Heart left ventricle (tissue), 16 donors: ENCODE measurements at regions of chr17 and their contacts with region 1.

Region 1: DNA sequence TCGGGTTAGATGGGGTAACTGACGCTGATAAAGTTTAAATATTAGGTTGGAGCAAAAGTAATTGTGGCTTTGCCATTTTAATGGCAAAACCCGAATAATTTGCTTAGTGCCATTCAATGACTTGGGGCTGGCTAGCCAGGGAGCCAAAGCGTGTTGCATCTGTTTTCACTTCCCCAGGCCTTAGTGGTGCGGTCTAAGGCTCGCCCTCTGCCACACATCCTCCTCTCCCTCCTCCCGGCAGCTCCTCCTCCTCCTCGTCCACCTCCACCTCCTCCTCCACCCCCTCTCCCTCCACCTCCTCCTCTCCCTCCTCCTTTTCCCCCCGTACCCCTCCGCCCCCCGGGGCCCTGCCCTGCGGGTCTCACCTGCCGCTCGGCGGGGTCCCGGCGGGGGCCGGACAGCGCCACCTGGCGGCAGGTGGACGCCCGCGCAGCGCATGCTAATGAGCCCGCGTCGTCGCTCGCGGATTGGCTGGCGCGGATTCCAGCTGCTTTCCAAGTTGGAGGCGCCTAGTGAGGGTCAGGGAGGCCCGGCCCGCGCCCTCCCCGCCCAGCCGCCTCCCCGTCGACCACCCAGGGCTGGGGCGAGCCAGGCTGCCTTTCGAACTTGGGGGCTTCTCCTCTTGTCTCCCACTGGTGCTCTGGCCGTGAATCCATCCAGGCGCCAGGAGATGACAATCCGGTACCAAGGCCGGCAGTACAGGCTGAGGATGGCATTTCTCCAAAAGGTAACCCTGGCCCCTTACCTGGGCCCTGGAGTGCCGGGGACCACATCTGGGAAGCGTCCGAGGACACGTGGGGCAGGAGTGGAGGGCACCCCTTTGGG is 36.6 kb upstream of the RGS9 start:
- DNase-seq: peak; percentile 85 to 95 (median 89)
- ATAC-seq: peak; percentile 79 to 97 (median 95)
- H3K4me3 ChIP-seq: peak overlapping the region; percentile 31 to 64 (median 54)
- H3K27ac ChIP-seq: peak overlapping the region in 9 of 12 donors; percentile 4 to 81 (median 58)
- H3K4me1 ChIP-seq: peaks cover 0 to 21% (median 7%) of the 10 kb centered on the region in 12 donors
- H3K27me3 ChIP-seq: no peaks in the 10 kb centered on the region
- CTCF ChIP-seq: peak; percentile 61 to 95 (median 86)
- POLR2A ChIP-seq: no peak

Region 2: GRCh38 chr17:64968652-64969501 is 131.7 kb before region 1 on chr17:
- intact Hi-C with region 1: loop called in 8 of 10 experiments (anchors 2 to 10 kb)
- DNase-seq: no peak
- ATAC-seq: no peak
- H3K4me3 ChIP-seq: no peak overlapping the region
- H3K27ac ChIP-seq: peak overlapping the region in 1 of 12 donors; percentile 74
- H3K4me1 ChIP-seq: peaks cover 0 to 33% (median 8%) of the 10 kb centered on the region in 12 donors
- H3K27me3 ChIP-seq: no peaks in the 10 kb centered on the region
- CTCF ChIP-seq: no peak
- POLR2A ChIP-seq: no peak

Region 3: GRCh38 chr17:64975329-64976087 is 125.0 kb before region 1 on chr17:
- intact Hi-C with region 1: loop called in 8 of 10 experiments (anchors 1 to 10 kb)
- DNase-seq: peak; percentile 94 to 98 (median 96)
- ATAC-seq: peak; percentile 90 to 98 (median 96)
- H3K4me3 ChIP-seq: peak overlapping the region; percentile 59 to 98 (median 82)
- H3K27ac ChIP-seq: peak overlapping the region; percentile 94 to 100 (median 98)
- H3K4me1 ChIP-seq: peaks cover 0 to 26% (median 16%) of the 10 kb centered on the region in 12 donors
- H3K27me3 ChIP-seq: no peaks in the 10 kb centered on the region
- CTCF ChIP-seq: peak in 1 of 12 donors; percentile 4
- POLR2A ChIP-seq: peak; percentile 47 to 89

Region 4: DNA sequence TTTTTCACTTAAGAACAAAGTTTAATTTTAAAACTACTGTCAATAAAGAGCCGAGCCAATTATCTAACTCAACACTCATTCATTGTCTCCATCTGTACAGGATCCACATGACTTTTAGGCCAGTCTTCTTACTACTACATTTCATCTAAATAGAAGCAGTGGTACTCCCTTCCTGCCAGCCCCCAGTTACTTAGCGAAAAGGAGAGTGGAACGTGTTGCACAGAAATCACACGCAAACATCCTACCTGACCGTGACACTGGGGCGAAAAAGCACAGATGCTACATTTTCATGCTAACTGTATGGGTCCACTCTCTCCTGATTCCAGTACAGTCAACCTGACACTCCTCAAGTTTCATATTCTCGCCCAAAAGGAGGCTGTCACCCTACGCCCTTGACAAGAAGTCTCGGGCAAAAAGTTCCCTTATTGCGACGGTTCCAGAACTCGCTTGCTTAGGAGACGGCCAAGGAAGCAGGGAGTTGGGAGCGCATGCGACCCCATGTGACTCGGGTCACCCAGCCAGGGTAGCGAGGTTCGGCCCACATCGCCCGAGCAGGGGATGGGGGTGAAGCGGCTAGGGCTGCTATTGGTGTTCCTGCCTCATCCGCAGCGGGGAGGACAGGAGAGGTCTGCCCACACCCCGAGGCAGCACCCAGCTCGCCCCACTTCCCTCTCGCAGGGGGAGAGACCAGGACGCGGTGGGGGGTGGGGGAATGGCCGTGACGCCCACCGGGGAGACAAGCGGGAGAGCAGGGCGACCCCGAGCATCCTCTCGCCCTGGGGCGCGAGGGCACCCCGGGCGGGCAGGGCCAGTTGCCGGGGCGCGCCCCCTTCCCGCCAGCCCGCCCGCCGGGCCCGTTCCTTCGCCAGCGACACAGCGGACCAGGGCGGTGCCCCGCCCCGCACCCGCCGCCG is 44.9 kb before region 1 on chr17:
- intact Hi-C with region 1: loop called in 7 of 10 experiments (anchors 1 to 5 kb)
- DNase-seq: peak; percentile 65 to 79 (median 72)
- ATAC-seq: peak in 3 of 4 donors; percentile 40 to 45 (median 40)
- H3K4me3 ChIP-seq: peak overlapping the region; percentile 73 to 94 (median 84)
- H3K27ac ChIP-seq: peak overlapping the region; percentile 91 to 100 (median 98)
- H3K4me1 ChIP-seq: peaks cover 4 to 66% (median 40%) of the 10 kb centered on the region in 12 donors
- H3K27me3 ChIP-seq: no peaks in the 10 kb centered on the region
- CTCF ChIP-seq: no peak
- POLR2A ChIP-seq: peak in 1 of 2 donors; percentile 32

Region 5: DNA sequence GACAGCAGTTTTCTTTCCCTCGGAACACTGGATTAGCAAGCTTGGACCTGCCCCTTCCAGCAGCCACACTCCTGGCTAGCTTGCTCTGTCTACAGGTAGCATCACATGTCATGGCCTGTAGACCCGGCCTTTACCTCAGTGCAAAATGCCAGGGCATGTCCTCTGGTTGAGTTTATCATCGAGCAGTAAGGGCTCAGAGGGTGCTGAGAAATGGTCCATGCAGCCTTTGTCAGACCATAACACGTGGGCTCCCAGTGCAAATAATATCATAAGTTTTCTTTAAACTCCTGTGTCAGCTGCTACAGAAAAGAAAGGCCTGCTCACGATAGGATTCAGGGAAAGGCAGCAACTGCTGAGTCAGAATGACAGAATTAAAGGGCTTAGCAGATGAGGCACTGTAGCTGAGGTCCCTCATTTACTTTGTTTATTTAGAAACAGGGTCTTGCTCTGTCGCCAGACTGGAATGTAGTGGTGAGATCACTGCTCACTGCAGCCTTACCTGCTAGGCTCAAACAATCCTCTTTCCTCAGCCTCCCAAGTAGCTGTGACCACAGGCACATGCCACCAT is 36.0 kb before region 1 on chr17:
- intact Hi-C with region 1: loop called in 5 of 10 experiments (anchors 5 kb)
- DNase-seq: no peak
- ATAC-seq: no peak
- H3K4me3 ChIP-seq: no peak overlapping the region
- H3K27ac ChIP-seq: no peak overlapping the region
- H3K4me1 ChIP-seq: peaks cover 0 to 25% (median 12%) of the 10 kb centered on the region in 12 donors
- H3K27me3 ChIP-seq: no peaks in the 10 kb centered on the region
- CTCF ChIP-seq: no peak
- POLR2A ChIP-seq: no peak